H1 (cell line): ENCODE measurements at regions of chrX and their contacts with region 1.

Region 1: GRCh38 chrX:137166591-137166990 is 132.8 kb upstream of the GPR101 start:
- DNase-seq: peak; percentile 2 to 57
- H3K4me3 ChIP-seq: no peak overlapping the region
- H3K27ac ChIP-seq: no peak overlapping the region
- H3K4me1 ChIP-seq: no peaks in the 10 kb centered on the region
- H3K27me3 ChIP-seq: no peaks in the 10 kb centered on the region
- CTCF ChIP-seq: peak; percentile 56 to 60 (median 59)
- EP300 ChIP-seq: no peak
- POLR2A ChIP-seq: no peak
- RAD21 ChIP-seq: peak; percentile 64 to 70

Region 2: DNA sequence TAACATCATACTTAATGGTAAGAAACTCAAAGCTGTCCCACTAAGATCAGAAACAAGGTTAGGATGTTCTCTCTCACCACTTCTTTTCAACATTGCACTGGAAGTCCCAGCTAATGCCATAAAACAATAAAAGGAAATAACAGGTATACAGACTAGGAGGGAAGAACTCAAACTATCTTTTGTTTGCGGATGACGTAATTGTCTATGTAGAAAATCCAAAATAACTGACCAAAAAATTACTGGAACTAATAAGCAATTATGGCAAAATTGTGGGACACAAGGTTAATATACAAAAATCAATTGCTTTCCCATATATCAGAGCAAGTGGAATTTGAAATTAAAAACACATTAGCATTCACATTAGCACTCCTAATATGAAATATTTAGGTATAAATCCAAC is 29.1 kb before region 1 on chrX:
- CTCF ChIA-PET with region 1: no interaction called
- POLR2A ChIA-PET with region 1: no interaction called
- DNase-seq: no peak
- H3K4me3 ChIP-seq: no peak overlapping the region
- H3K27ac ChIP-seq: no peak overlapping the region
- H3K4me1 ChIP-seq: no peaks in the 10 kb centered on the region
- H3K27me3 ChIP-seq: no peaks in the 10 kb centered on the region
- CTCF ChIP-seq: no peak
- EP300 ChIP-seq: no peak
- POLR2A ChIP-seq: no peak
- RAD21 ChIP-seq: no peak

Region 3: GRCh38 chrX:137151403-137151802 is 15.2 kb before region 1 on chrX:
- CTCF ChIA-PET with region 1: interaction called, 19 read pairs
- POLR2A ChIA-PET with region 1: no interaction called
- DNase-seq: no peak
- H3K4me3 ChIP-seq: no peak overlapping the region
- H3K27ac ChIP-seq: no peak overlapping the region
- H3K4me1 ChIP-seq: no peaks in the 10 kb centered on the region
- H3K27me3 ChIP-seq: no peaks in the 10 kb centered on the region
- CTCF ChIP-seq: peak; percentile 13 to 58 (median 52)
- EP300 ChIP-seq: no peak
- POLR2A ChIP-seq: no peak
- RAD21 ChIP-seq: peak; percentile 69 to 78

Region 4: DNA sequence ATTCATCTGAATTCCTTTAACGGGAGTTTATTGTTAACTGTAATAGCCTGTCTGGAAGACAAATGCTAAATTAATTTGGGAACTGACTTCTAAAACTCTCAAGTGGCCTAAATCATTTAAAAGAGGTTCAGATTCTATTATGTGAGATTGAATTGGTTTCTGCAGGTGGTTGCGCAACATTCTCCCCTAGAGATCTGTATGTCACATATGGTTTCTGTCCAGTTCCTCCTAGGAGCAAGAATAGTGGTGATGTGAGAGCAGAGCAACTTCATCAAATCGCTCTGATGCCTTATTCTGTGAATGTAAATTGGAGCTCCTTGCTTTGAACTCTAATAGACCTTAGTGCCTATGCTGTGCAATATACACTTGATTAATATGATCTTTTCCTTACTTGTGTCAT is 11.8 kb after region 1 on chrX:
- CTCF ChIA-PET with region 1: interaction called, 26 read pairs
- POLR2A ChIA-PET with region 1: no interaction called
- DNase-seq: no peak
- H3K4me3 ChIP-seq: no peak overlapping the region
- H3K27ac ChIP-seq: no peak overlapping the region
- H3K4me1 ChIP-seq: no peaks in the 10 kb centered on the region
- H3K27me3 ChIP-seq: no peaks in the 10 kb centered on the region
- CTCF ChIP-seq: no peak
- EP300 ChIP-seq: no peak
- POLR2A ChIP-seq: no peak
- RAD21 ChIP-seq: no peak

Region 5: DNA sequence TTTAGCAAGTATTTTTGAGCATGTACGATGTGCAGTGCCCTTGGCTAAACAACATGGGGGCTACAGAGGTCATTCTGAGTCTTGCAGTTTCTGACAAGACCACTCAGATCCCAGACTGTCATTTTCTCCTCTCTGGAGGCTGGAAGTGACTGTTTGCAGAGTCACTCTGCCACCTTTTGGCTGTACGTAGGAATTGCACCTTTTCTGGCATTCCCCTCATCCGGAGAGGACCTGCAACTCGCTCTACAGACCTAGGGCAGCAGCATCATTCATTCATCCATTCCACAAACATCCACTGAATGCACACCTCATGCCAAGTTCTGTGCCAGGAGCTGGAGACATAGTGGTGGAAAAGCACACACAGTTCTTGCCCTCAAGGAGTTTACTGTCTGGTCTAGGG is 27.6 kb after region 1 on chrX:
- CTCF ChIA-PET with region 1: interaction called, 55 read pairs
- POLR2A ChIA-PET with region 1: no interaction called
- DNase-seq: peak; percentile 3 to 47
- H3K4me3 ChIP-seq: no peak overlapping the region
- H3K27ac ChIP-seq: no peak overlapping the region
- H3K4me1 ChIP-seq: no peaks in the 10 kb centered on the region; a peak in 1 of 7 replicates
- H3K27me3 ChIP-seq: no peaks in the 10 kb centered on the region
- CTCF ChIP-seq: peak; percentile 28 to 73 (median 69)
- EP300 ChIP-seq: no peak
- POLR2A ChIP-seq: no peak
- RAD21 ChIP-seq: peak; percentile 76 to 82